ENCODE measurements at regions of chr4 and their contacts with region 1.

Region 1: GRCh38 chr4:66613591-66613990 is 931.7 kb downstream of the CENPC start:
- DNase-seq: no peak
- ATAC-seq: no peak
- H3K4me3 Mint-ChIP-seq: no peak overlapping the region
- H3K27ac Mint-ChIP-seq: no peak overlapping the region
- H3K4me1 Mint-ChIP-seq: no peaks in the 10 kb centered on the region
- H3K27me3 Mint-ChIP-seq: no peaks in the 10 kb centered on the region

Region 2: GRCh38 chr4:66404141-66404540 is 209.4 kb before region 1 on chr4:
- CTCF ChIA-PET with region 1: no interaction called
- POLR2A ChIA-PET with region 1: no interaction called
- intact Hi-C with region 1: no loop called
- DNase-seq: no peak
- ATAC-seq: no peak
- H3K4me3 Mint-ChIP-seq: no peak overlapping the region
- H3K27ac Mint-ChIP-seq: no peak overlapping the region
- H3K4me1 Mint-ChIP-seq: no peaks in the 10 kb centered on the region
- H3K27me3 Mint-ChIP-seq: no peaks in the 10 kb centered on the region

Region 3: GRCh38 chr4:66602622-66603021 is 11.0 kb before region 1 on chr4:
- CTCF ChIA-PET with region 1: interaction called, 3 read pairs
- POLR2A ChIA-PET with region 1: no interaction called
- intact Hi-C with region 1: loop called in 1 of 2 experiments (anchors 2 kb)
- DNase-seq: no peak
- ATAC-seq: no peak
- H3K4me3 Mint-ChIP-seq: no peak overlapping the region
- H3K27ac Mint-ChIP-seq: no peak overlapping the region
- H3K4me1 Mint-ChIP-seq: no peaks in the 10 kb centered on the region
- H3K27me3 Mint-ChIP-seq: no peaks in the 10 kb centered on the region

Measured in activated CD4-positive, alpha-beta T cell treated with anti-CD3 and anti-CD28 coated beads for 36 hours (primary cell).